Sciatic nerve (tissue), 2 donors: ENCODE measurements at regions of chr1 and their contacts with region 1.

Region 1: GRCh38 chr1:165392634-165393571 is 36.4 kb upstream of the LMX1A start:
- DNase-seq: peak; percentile 95
- ATAC-seq: peak; percentile 99

Region 2: GRCh38 chr1:165592945-165593823 is 200.3 kb after region 1 on chr1:
- intact Hi-C with region 1: loop called (anchors 5 kb)
- DNase-seq: peak; percentile 87
- ATAC-seq: peak; percentile 66